Prostate gland (tissue), 2 donors: ENCODE measurements at regions of chr12 and their contacts with region 1.

Region 1: GRCh38 chr12:4610481-4610880 is 38.4 kb downstream of the AKAP3 start:
- DNase-seq: no peak
- H3K4me3 ChIP-seq: no peak overlapping the region
- H3K27ac ChIP-seq: no peak overlapping the region
- H3K4me1 ChIP-seq: no peaks in the 10 kb centered on the region
- H3K27me3 ChIP-seq: no peaks in the 10 kb centered on the region
- CTCF ChIP-seq: no peak
- POLR2A ChIP-seq: no peak

Region 2: DNA sequence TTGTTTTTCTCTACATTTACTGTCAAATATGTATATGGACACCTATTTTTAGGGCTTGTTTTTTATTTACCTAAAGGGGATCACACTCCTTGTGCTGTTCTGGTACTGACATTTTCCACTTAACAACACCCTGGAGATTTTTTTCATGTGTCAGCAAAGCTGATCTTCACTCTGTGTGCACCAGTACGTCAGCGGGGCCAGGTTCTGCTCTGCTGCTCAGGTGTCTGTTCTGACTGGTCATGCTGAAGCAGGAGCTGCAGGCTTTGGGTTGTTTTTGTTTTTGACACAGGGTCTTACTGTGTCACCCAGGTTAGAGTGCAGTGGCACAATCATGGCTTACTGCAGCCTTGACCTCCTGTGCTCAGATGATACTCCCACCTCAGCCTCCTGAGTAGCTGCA is 418.8 kb before region 1 on chr12:
- intact Hi-C with region 1: no loop called
- DNase-seq: no peak
- H3K4me3 ChIP-seq: no peak overlapping the region
- H3K27ac ChIP-seq: no peak overlapping the region
- H3K4me1 ChIP-seq: no peaks in the 10 kb centered on the region
- H3K27me3 ChIP-seq: no peaks in the 10 kb centered on the region
- CTCF ChIP-seq: no peak
- POLR2A ChIP-seq: no peak

Region 3: DNA sequence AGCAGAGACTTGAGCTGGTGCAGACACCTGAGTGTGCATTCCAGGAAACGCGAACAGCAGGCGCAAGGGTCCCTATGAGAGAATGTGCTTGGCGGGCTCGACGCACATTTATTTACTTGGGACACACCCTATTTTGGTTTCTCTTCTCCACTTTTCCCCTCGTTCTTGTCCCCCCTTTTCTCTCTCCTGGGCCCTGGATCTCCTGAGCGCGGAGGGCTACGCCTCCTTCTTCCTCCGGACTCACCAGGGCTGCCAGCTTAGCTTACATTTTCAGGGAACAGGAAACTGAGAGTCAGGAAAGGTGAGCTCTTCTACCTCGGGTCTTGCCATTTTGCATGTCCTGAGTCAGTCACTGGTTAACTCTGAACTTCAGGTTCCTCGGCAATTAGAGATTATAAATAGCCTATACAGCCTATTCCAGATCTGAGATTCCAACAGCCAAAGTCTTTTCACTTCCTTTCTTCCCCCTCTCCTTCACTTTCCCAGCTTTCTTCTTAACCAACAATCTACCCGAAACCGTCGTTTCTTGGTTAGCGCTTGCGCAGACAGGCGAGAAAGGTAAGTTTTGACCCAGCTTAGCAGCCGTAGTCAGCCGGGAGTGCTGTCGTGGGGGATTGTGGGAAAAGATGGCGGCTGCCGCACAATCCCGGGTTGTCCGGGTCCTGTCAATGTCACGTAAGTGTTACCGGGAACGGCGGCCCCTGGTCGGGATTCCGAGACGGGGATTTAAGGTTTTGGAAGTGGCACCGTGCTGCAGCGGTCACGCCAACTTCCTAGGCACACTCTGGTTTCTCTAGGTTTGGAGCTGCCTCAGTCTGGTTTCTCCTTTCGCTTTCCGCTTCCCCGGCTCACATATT is 38.2 kb after region 1 on chr12 and contains the starts of genes AKAP3 and NDUFA9:
- intact Hi-C with region 1: loop called (anchors 5 kb)
- DNase-seq: peak; percentile 81
- H3K4me3 ChIP-seq: peak within 1 kb of the TSS; percentile 73 to 78
- H3K27ac ChIP-seq: peak within 1 kb of the TSS; percentile 84 to 89
- H3K4me1 ChIP-seq: no peaks in the 10 kb centered on the region
- H3K27me3 ChIP-seq: no peaks in the 10 kb centered on the region
- CTCF ChIP-seq: peak in 1 of 4 experiments; percentile 14
- POLR2A ChIP-seq: peak; percentile 30
- total RNA-seq, gene AKAP3: 1.8 to 13.9 TPM
- total RNA-seq, gene NDUFA9: 21.8 to 38.8 TPM